ENCODE measurements at regions of chr9 and their contacts with region 1.

Region 1: DNA sequence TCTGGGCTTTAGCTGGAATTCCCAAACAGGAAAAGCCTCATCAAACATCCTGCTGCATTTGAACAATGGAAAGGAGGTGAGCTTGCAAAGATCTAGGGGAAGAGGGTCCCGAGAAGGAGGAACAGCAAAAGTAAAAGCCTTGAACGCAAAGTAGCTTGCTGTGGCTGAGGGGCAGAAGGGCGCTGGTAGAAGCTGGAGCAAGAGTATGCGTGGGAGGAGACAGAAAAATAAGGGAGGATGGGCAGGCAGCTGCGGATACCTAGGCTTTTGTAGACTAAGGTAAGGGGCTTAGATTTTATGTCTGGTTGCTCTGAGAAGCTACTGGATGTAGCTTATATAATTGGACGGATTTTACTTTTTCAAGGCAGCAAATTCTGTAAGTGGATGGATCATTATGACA is 21.9 kb upstream of the TGFBR1 start:
- DNase-seq: no peak
- H3K4me3 ChIP-seq: no peak overlapping the region
- CTCF ChIP-seq: no peak

Region 2: GRCh38 chr9:99039505-99040182 is 43.4 kb before region 1 on chr9:
- in situ Hi-C with region 1: loop called (anchors 5 kb)
- DNase-seq: no peak
- H3K4me3 ChIP-seq: no peak overlapping the region
- CTCF ChIP-seq: no peak